ENCODE measurements at regions of chr21 and their contacts with region 1.

Region 1: GRCh38 chr21:44792702-44793591 is 8.7 kb downstream of the UBE2G2 start:
- DNase-seq: peak; percentile 62
- ATAC-seq: peak; percentile 95
- H3K4me3 Mint-ChIP-seq: no peak overlapping the region
- H3K27ac Mint-ChIP-seq: peak overlapping the region; percentile 20
- H3K4me1 Mint-ChIP-seq: peaks cover 37% of the 10 kb centered on the region
- H3K27me3 Mint-ChIP-seq: no peaks in the 10 kb centered on the region

Region 2: GRCh38 chr21:44510508-44511210 is 282.3 kb before region 1 on chr21:
- CTCF ChIA-PET with region 1: interaction called, 63 read pairs
- POLR2A ChIA-PET with region 1: interaction called, 8 read pairs
- DNase-seq: peak; percentile 81
- ATAC-seq: peak; percentile 93
- H3K4me3 Mint-ChIP-seq: peak overlapping the region; percentile 22
- H3K27ac Mint-ChIP-seq: no peak overlapping the region
- H3K4me1 Mint-ChIP-seq: peaks cover 2% of the 10 kb centered on the region
- H3K27me3 Mint-ChIP-seq: no peaks in the 10 kb centered on the region

Region 3: GRCh38 chr21:44742418-44743153 is 50.4 kb before region 1 on chr21:
- CTCF ChIA-PET with region 1: interaction called, 20 read pairs
- POLR2A ChIA-PET with region 1: no interaction called
- DNase-seq: no peak
- ATAC-seq: no peak
- H3K4me3 Mint-ChIP-seq: no peak overlapping the region
- H3K27ac Mint-ChIP-seq: no peak overlapping the region
- H3K4me1 Mint-ChIP-seq: no peaks in the 10 kb centered on the region
- H3K27me3 Mint-ChIP-seq: no peaks in the 10 kb centered on the region

Region 4: DNA sequence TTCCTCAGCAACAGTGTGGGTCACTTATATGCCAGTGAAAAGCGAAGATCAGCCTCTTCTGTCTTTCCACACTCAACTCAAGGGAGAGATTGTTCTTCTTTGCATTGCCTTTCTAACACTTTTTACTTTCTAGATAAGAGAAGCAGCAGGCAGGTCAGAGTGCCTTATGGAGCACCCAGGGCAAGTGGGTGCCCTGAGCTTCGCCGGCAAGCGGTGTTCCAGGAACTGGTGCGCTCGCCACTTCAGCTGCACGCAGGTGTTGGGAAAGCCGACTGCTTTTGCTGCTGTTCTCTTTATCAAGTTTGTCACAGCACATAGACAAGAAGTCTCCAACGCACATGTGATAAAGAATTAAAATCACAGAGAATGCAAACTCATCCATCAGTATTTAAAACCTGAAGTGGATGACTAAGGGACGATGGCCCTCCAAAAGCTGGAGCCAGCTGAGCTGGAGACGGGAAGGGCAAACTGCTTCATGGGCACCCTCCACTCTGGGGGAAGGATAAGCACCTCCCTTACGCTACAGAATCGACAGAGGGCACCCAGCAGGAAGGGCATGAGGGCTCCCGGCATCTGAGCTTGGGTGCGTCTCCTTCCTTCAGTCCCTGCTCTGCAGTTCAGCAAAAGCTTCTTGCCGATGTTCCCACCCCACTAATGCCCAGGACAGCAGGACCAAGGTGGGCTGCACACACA is 12.0 kb before region 1 on chr21:
- CTCF ChIA-PET with region 1: interaction called, 26 read pairs
- POLR2A ChIA-PET with region 1: no interaction called
- DNase-seq: no peak
- ATAC-seq: no peak
- H3K4me3 Mint-ChIP-seq: no peak overlapping the region
- H3K27ac Mint-ChIP-seq: no peak overlapping the region
- H3K4me1 Mint-ChIP-seq: peaks cover 17% of the 10 kb centered on the region
- H3K27me3 Mint-ChIP-seq: no peaks in the 10 kb centered on the region

Measured in activated CD8-positive, alpha-beta T cell treated with anti-CD3 and anti-CD28 coated beads, Interleukin-2, amount 10 ng/mL, durations not matched to agents 7 days and 5 days (primary cell).